Activated CD4-positive, alpha-beta memory T cell treated with anti-CD3 and anti-CD28 coated beads for 36 hours (primary cell): ENCODE measurements at regions of chr20 and their contacts with region 1.

Region 1: DNA sequence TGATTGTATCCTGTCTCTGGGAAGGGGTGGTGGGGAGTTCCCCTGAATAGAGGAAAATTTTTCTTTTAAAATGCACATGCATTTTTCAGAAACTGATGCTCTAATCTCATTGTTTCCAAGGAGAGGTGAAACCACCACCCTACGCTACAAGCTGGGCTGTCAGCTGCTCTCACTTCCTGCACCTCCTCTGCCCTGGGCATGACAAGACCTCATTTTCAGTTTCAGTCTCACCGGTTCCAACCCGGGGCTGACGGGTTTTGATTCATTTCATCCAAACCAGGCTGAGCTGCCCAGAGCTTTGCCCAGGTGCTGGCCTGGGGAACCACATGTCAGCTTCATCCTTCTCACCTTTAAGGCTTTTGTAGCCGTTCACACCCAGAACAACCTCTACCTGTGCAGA is 99.7 kb downstream of the EYA2 start:
- DNase-seq: peak; percentile 88
- H3K4me3 Mint-ChIP-seq: peak overlapping the region; percentile 50
- H3K27ac Mint-ChIP-seq: peak overlapping the region; percentile 69
- H3K4me1 Mint-ChIP-seq: peaks cover 35% of the 10 kb centered on the region
- H3K27me3 Mint-ChIP-seq: peaks cover 13% of the 10 kb centered on the region

Region 2: DNA sequence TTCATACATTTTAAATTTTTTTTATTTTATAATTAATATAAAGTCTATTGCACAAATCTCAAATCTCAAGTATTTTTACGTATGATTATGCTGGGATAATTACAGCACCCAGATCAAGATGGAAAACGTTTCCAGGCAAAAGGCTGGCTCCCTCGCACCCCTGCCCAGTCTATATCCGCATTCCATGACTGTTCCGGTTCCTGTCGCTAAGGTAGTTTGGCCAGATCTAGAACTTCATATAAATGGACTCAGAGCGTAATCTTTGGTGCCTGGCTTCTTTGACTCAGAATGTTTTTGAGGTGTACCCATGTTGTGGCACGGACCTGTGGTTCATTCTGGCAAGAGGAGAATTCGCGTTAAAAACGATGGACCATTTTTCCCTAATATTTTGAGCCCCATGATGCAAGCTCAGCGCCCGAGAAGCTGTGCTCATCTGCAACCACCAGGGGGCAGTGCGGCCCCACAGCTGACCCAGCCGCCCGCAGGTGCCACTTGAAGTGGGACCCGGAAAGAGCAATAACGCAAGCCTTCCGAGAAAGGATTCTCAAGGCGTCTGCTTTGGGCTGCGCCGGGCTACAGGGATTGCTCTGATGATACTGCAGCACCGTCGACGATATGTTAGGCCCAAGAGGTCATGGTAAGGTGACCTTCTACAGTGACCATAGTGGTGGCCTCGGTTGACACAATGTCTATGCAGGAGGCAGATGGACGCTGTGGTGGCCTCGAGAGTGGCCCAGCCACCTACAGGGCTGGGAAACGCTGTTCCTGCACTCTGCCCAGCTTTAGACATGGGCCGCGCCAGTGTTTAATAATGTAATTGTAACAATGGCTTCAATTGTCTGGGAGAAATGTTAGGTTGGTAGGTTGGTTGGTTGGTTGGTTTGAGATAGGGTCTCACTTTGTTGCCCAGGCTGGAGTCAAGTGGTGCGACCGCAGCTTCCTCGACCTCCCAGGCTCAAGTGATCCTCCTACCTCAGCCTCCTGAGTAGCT is 202.0 kb after region 1 on chr20:
- CTCF ChIA-PET with region 1: no interaction called
- POLR2A ChIA-PET with region 1: no interaction called
- intact Hi-C with region 1: loop called (anchors 10 kb)
- DNase-seq: peak; percentile 88
- H3K4me3 Mint-ChIP-seq: no peak overlapping the region
- H3K27ac Mint-ChIP-seq: no peak overlapping the region
- H3K4me1 Mint-ChIP-seq: peaks cover 15% of the 10 kb centered on the region
- H3K27me3 Mint-ChIP-seq: peaks cover 3% of the 10 kb centered on the region